Dorsolateral prefrontal cortex (tissue), 120 donors: ENCODE measurements at regions of chr11 and their contacts with region 1.

Region 1: GRCh38 chr11:65314501-65315203 is at the start of gene CDC42EP2:
- DNase-seq: peak; percentile 72 to 94 (median 87)
- H3K4me3 ChIP-seq: peak within 1 kb of the TSS; percentile 67 to 99 (median 94)
- H3K27ac ChIP-seq: peak within 1 kb of the TSS; percentile 68 to 98 (median 91)
- H3K27me3 ChIP-seq: no peaks in the 10 kb centered on the region
- CTCF ChIP-seq: peak in 30 of 56 donors; percentile 3 to 49 (median 26)
- total RNA-seq, gene CDC42EP2: 7.5 to 83.6 (median 20.5) TPM

Region 2: GRCh38 chr11:65159012-65159411 is 155.6 kb before region 1 on chr11:
- intact Hi-C with region 1: no loop called
- DNase-seq: no peak
- H3K4me3 ChIP-seq: no peak overlapping the region
- H3K27ac ChIP-seq: no peak overlapping the region
- H3K27me3 ChIP-seq: no peaks in the 10 kb centered on the region
- CTCF ChIP-seq: no peak

Region 3: GRCh38 chr11:65274735-65275682 is 39.6 kb before region 1 on chr11:
- intact Hi-C with region 1: loop called (anchors 1 to 2 kb)
- DNase-seq: peak in 8 of 10 donors; percentile 61 to 85 (median 74)
- H3K4me3 ChIP-seq: peak overlapping the region in 19 of 59 donors; percentile 8 to 38 (median 21)
- H3K27ac ChIP-seq: peak overlapping the region in 52 of 59 donors; percentile 5 to 87 (median 63)
- H3K27me3 ChIP-seq: no peaks in the 10 kb centered on the region
- CTCF ChIP-seq: peak; percentile 70 to 97 (median 90)

Region 4: DNA sequence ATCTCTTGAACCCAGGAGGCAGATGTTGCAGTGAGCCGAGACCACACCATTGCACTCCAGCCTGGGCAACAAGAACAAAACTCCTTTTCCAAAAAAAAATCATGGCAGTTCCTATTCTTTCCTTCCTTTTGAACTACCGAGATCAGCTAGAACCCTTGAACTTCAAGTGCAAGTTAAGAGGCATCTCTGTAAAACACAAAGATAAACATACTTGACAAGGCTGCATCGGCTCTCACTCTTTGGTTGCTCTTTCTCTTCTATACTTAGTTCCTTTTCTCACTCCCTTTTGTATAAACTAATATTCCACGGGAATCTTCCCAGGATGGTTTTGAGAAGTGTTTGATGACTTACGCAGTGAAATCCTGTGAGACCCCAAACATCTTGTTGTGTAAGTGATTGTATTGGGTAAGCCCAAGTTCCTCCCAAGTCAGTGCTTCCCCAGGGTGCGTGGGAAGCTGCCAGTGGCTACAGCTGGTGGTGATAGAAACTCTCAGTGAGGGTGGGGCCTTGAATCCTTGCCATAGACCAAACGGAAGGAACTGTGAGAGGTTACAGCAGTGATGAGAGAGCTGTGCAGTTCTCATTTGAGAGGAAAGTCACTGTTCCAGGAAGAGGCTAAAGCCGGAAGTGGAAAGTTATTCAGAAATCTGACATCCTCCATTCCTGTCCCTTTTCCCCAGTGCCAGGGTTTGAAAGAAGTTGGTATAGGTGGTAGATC is 24.0 kb before region 1 on chr11:
- intact Hi-C with region 1: loop called in 1 of 2 experiments (anchors 2 kb)
- DNase-seq: peak in 9 of 10 donors; percentile 17 to 92 (median 86)
- H3K4me3 ChIP-seq: peak overlapping the region in 52 of 59 donors; percentile 0 to 63 (median 34)
- H3K27ac ChIP-seq: peak overlapping the region; percentile 83 to 100 (median 98)
- H3K27me3 ChIP-seq: no peaks in the 10 kb centered on the region
- CTCF ChIP-seq: peak in 6 of 56 donors; percentile 6 to 18 (median 11)